Naive thymus-derived CD8-positive, alpha-beta T cell (primary cell): ENCODE measurements at regions of chr13 and their contacts with region 1.

Region 1: GRCh38 chr13:40508127-40508526 is 158.3 kb downstream of the FOXO1 start:
- DNase-seq: peak in 3 of 10 donors; percentile 38 to 58 (median 54)
- ATAC-seq: peak; percentile 66 to 74
- H3K4me3 Mint-ChIP-seq: peak overlapping the region in 9 of 10 donors; percentile 39 to 81 (median 65)
- H3K27ac Mint-ChIP-seq: peak overlapping the region; percentile 74 to 95 (median 92)
- H3K4me1 Mint-ChIP-seq: peaks cover 51 to 77% (median 70%) of the 10 kb centered on the region in 4 donors
- H3K27me3 Mint-ChIP-seq: no peaks in the 10 kb centered on the region

Region 2: DNA sequence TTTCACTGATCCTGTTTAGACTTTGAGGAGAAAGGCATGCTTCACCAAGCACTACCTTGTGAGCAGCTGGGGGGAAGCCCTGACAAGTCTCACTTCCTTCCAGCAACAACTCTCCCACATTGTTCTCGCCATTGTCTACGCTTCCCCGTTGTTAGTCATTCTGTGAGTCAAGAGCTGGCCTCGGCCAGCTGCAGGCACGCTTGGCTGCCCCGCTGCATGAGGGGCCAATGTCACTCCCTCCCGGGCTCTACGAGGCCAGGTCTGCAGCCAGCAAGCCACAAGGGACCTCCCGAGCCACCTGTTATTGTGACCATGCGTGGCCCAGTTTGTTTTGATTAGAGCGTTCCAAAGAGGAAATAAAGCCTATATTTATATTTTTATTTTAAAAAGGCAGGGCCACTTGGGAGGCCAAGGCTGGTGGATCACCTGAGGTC is 62.6 kb before region 1 on chr13:
- POLR2A ChIA-PET with region 1: no interaction called
- DNase-seq: peak in 2 of 10 donors; percentile 57 to 70
- ATAC-seq: peak in 1 of 2 donors; percentile 88
- H3K4me3 Mint-ChIP-seq: peak overlapping the region in 1 of 10 donors; percentile 45
- H3K27ac Mint-ChIP-seq: peak overlapping the region in 2 of 10 donors; percentile 63 to 67
- H3K4me1 Mint-ChIP-seq: peaks cover 8 to 46% (median 19%) of the 10 kb centered on the region in 4 donors
- H3K27me3 Mint-ChIP-seq: no peaks in the 10 kb centered on the region

Region 3: GRCh38 chr13:40485611-40486517 is 22.3 kb before region 1 on chr13:
- POLR2A ChIA-PET with region 1: interaction called, 21 read pairs
- DNase-seq: peak; percentile 38 to 91 (median 78)
- ATAC-seq: peak; percentile 90 to 91
- H3K4me3 Mint-ChIP-seq: peak overlapping the region; percentile 50 to 86 (median 74)
- H3K27ac Mint-ChIP-seq: peak overlapping the region; percentile 89 to 99 (median 96)
- H3K4me1 Mint-ChIP-seq: peaks cover 56 to 95% (median 92%) of the 10 kb centered on the region in 4 donors
- H3K27me3 Mint-ChIP-seq: no peaks in the 10 kb centered on the region